ENCODE measurements at regions of chr16 and their contacts with region 1.

Region 1: DNA sequence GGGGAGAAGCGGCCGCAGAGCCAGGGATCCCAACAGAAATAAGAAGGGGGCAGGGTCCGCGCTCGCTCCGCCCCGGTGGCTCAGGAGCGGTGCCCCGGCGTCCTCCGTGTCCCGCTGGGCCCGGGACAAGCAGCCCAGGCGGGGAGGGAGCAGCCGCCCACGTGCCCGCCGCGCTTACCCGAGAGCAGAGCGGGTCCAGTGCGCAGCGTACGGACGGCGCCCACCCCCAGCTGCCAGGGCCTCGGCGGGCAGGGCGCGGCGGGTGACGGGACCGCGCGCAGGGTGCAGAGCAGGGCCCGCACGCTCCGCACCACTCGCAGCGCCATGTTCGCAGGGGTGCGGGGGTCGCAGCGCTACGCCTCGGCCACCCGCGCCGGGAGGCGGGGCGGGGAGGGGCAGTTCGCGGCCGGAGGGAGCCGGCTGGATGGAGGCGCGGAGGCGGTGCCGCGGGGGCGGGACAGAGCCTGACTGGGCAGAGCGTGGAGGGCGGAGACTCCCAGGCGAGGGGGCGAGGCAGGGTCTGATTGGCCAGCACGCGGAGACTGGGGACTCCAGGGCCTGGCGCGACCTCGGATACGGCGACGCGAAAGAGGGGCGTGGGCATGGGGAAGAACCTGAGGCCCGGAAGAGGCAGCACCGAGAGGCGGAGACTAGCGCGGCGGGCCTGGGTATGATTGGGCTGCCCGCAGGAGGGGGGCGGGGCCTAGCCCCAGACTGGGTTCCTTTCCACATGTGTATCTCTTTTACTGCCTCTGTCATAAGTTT is at the start of gene GCSH:
- DNase-seq: peak; percentile 99
- H3K4me3 Mint-ChIP-seq: peak within 1 kb of the TSS; percentile 79
- H3K27ac Mint-ChIP-seq: peak within 1 kb of the TSS; percentile 70
- H3K4me1 Mint-ChIP-seq: peaks cover 14% of the 10 kb centered on the region
- H3K27me3 Mint-ChIP-seq: no peaks in the 10 kb centered on the region
- total RNA-seq, gene GCSH: 23.9 to 24.7 TPM

Region 2: DNA sequence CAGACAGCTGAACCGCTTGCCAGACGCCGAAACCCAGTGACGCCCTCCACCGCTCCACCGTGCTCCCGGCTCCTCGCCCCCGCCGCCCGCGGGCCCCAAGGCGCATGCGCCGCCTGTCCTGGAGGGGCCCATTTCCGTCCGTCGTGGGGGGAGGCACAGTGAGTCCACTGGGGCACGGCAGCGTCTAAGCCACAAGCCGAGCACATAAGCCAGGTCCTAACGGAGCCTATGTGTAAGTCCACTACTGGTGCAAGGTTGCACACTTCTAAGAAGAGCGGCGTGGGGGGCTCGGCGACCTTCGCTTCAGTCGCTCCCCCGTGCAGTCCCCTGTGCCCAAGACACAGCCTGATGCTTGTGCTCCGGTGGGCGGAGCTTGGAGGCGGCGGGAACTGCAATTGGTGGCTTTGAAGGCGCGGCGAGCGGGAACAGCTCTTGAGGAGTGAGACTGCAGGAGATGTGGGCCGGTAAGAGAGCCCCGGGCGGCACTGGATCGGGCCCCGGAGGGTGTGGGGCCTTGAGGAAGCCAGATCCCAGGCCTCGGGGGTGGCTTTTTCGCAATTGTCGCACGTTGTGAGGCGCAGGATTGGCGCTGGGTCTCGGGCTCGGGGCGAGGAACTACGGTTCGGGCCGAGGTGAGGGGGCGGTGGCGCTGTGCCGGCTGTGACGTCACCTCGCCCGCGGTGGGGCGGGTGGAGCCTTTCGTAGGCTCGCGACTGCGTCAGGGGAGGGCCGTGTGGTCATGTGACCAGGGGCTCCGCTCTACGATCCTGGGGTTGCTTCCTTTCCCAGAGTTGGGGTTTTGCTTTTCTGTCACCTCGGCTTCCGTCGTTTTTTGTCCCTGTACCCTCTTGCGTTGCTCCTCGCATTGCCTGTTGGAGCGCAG is 89.1 kb before region 1 on chr16 and contains the starts of genes CENPN and CMC2:
- CTCF ChIA-PET with region 1: no interaction called
- POLR2A ChIA-PET with region 1: no interaction called
- intact Hi-C with region 1: loop called (anchors 1 kb)
- DNase-seq: peak; percentile 98
- H3K4me3 Mint-ChIP-seq: peak within 1 kb of the TSS; percentile 88
- H3K27ac Mint-ChIP-seq: peak within 1 kb of the TSS; percentile 98
- H3K4me1 Mint-ChIP-seq: peaks cover 41% of the 10 kb centered on the region
- H3K27me3 Mint-ChIP-seq: no peaks in the 10 kb centered on the region
- total RNA-seq, gene CENPN: 71.9 to 76.0 TPM
- total RNA-seq, gene CMC2: 147 to 148 TPM